Prostate gland (tissue), 2 donors: ENCODE measurements at regions of chr4 and their contacts with region 1.

Region 1: GRCh38 chr4:173318648-173319211 is 15.4 kb downstream of the HMGB2 start:
- DNase-seq: no peak
- H3K4me3 ChIP-seq: no peak overlapping the region
- H3K27ac ChIP-seq: no peak overlapping the region
- H3K4me1 ChIP-seq: no peaks in the 10 kb centered on the region
- H3K27me3 ChIP-seq: no peaks in the 10 kb centered on the region
- CTCF ChIP-seq: peak; percentile 16 to 56 (median 40)
- POLR2A ChIP-seq: no peak

Region 2: DNA sequence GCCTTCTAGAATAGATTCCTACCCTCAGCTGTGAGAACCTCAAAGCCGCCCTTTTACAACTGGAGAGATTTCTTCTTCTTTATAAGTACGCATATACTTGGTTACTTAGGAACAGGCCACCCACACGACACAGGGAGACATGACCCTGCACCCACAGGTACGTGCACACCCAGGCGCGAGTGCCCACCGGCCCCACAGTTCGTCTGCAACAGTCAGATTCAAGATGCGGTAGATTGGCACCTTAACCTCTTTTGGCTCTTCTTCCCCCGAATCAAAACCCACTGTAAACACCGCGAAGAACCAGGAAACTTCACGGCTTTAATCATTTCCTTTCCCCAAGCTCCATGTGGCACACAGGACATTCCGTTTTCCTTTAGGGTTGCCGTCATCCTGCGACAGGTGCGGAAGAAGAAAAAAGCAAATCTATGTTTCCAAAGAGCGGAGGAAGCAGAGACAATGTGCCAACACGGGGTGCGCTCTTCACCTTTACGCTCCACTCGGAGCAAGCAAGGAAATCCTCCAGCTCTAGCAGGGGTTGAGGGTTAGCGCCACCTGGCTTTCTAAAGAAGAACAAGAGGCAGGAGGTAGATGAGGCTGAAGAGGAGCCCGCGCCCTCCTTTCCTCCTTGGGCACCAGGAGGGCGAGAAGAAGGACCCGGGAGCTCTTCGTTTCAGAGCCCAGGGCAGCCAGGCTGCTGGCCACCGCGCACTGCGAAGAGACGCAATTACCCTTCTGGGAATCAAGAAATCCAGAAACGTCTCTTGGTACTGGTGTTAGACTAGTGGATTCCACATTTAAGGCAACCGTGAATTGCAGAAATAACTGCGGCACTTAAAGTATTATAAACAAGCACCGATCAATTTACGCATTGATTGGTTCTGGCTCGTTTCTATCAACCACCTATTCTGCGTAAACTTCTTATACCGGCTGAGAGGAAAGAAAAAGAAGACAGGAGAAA is 175.6 kb after region 1 on chr4:
- intact Hi-C with region 1: loop called (anchors 10 kb)
- DNase-seq: peak; percentile 47
- H3K4me3 ChIP-seq: peak overlapping the region; percentile 1 to 16
- H3K27ac ChIP-seq: no peak overlapping the region
- H3K4me1 ChIP-seq: no peaks in the 10 kb centered on the region
- H3K27me3 ChIP-seq: no peaks in the 10 kb centered on the region
- CTCF ChIP-seq: peak in 3 of 4 experiments; percentile 58 to 64 (median 59)
- POLR2A ChIP-seq: no peak